ENCODE measurements at regions of chr2 and their contacts with region 1.

Region 1: DNA sequence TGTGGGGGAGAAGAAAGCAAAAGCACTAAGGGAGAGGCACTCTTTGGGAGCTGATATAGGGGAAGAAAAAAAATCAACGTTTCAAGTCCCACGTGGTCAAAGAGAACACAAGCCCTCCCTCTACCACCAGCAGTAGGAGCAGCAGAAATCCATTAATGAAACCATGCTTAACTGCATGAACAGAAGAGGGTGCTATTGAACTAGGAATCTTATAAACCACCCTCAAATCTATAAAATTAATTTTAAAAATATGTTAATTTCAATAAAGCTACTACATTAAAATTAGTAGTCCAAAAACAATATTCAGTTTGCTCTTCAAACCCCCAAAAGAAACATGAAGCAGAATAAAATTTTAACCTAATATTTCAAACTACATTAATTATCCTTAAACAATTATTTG is 147.8 kb downstream of the TMEM18 start:
- DNase-seq: peak in 2 of 9 experiments; percentile 50 to 66
- ATAC-seq: peak; percentile 66
- H3K4me3 ChIP-seq: no peak overlapping the region
- H3K4me3 Mint-ChIP-seq: no peak overlapping the region
- H3K27ac ChIP-seq: no peak overlapping the region
- H3K27ac Mint-ChIP-seq: no peak overlapping the region
- H3K4me1 ChIP-seq: no peaks in the 10 kb centered on the region
- H3K4me1 Mint-ChIP-seq: peaks cover 3% of the 10 kb centered on the region
- H3K27me3 ChIP-seq: peaks cover 0 to 13% of the 10 kb centered on the region in 2 experiments
- H3K27me3 Mint-ChIP-seq: peaks cover 6% of the 10 kb centered on the region
- CTCF ChIP-seq: peak; percentile 68

Region 2: GRCh38 chr2:467892-468647 is 61.4 kb before region 1 on chr2:
- CTCF ChIA-PET with region 1: no interaction called
- POLR2A ChIA-PET with region 1: no interaction called
- intact Hi-C with region 1: no loop called
- DNase-seq: no peak
- ATAC-seq: no peak
- H3K4me3 ChIP-seq: no peak overlapping the region
- H3K4me3 Mint-ChIP-seq: peak overlapping the region; percentile 29
- H3K27ac ChIP-seq: no peak overlapping the region
- H3K27ac Mint-ChIP-seq: no peak overlapping the region
- H3K4me1 ChIP-seq: no peaks in the 10 kb centered on the region
- H3K4me1 Mint-ChIP-seq: peaks cover 9% of the 10 kb centered on the region
- H3K27me3 ChIP-seq: peaks cover 0 to 22% of the 10 kb centered on the region in 2 experiments
- H3K27me3 Mint-ChIP-seq: peaks cover 33% of the 10 kb centered on the region
- CTCF ChIP-seq: no peak

Region 3: GRCh38 chr2:1769703-1770422 is 1240.4 kb after region 1 on chr2:
- CTCF ChIA-PET with region 1: no interaction called
- POLR2A ChIA-PET with region 1: no interaction called
- intact Hi-C with region 1: loop called in 1 of 2 experiments (anchors 2 kb)
- DNase-seq: peak in 7 of 9 experiments; percentile 27 to 74 (median 46)
- ATAC-seq: no peak
- H3K4me3 ChIP-seq: no peak overlapping the region
- H3K4me3 Mint-ChIP-seq: no peak overlapping the region
- H3K27ac ChIP-seq: no peak overlapping the region
- H3K27ac Mint-ChIP-seq: no peak overlapping the region
- H3K4me1 ChIP-seq: no peaks in the 10 kb centered on the region
- H3K4me1 Mint-ChIP-seq: no peaks in the 10 kb centered on the region
- H3K27me3 ChIP-seq: no peaks in the 10 kb centered on the region
- H3K27me3 Mint-ChIP-seq: peaks cover 3% of the 10 kb centered on the region
- CTCF ChIP-seq: peak; percentile 45